ENCODE measurements at regions of chr16 and their contacts with region 1.

Region 1: GRCh38 chr16:81873843-81874752 is 95.0 kb downstream of the PLCG2 start:
- DNase-seq: peak in 2 of 4 donors; percentile 26 to 69
- ATAC-seq: peak; percentile 91
- H3K4me3 ChIP-seq: no peak overlapping the region
- H3K27ac ChIP-seq: peak overlapping the region in 1 of 2 donors; percentile 35
- H3K4me1 ChIP-seq: peaks cover 0 to 10% of the 10 kb centered on the region in 2 donors
- H3K27me3 ChIP-seq: no peaks in the 10 kb centered on the region
- CTCF ChIP-seq: peak; percentile 84 to 90

Region 2: GRCh38 chr16:81779536-81780320 is 94.4 kb before region 1 on chr16:
- intact Hi-C with region 1: loop called in 1 of 2 experiments (anchors 10 kb)
- DNase-seq: peak in 2 of 4 donors; percentile 67 to 92
- ATAC-seq: peak; percentile 52
- H3K4me3 ChIP-seq: peak overlapping the region; percentile 57 to 72
- H3K27ac ChIP-seq: peak overlapping the region; percentile 44 to 87
- H3K4me1 ChIP-seq: peaks cover 0 to 37% of the 10 kb centered on the region in 2 donors
- H3K27me3 ChIP-seq: peaks cover 0 to 13% of the 10 kb centered on the region in 2 donors
- CTCF ChIP-seq: no peak